ENCODE measurements at regions of chr3 and their contacts with region 1.

Region 1: GRCh38 chr3:48548729-48549705 is 7.6 kb downstream of the PFKFB4 start:
- DNase-seq: peak; percentile 54 to 95
- H3K4me3 ChIP-seq: no peak overlapping the region
- H3K27ac ChIP-seq: peak overlapping the region; percentile 25; the same call in 1 of the 2 replicates
- H3K4me1 ChIP-seq: peaks cover 0 to 1% (median under 1%) of the 10 kb centered on the region in 4 experiments; a peak in 3 of 7 replicates
- H3K27me3 ChIP-seq: no peaks in the 10 kb centered on the region
- CTCF ChIP-seq: peak in 2 of 3 experiments; percentile 95 to 99; a peak in 3 of 4 replicates
- EP300 ChIP-seq: no peak
- POLR2A ChIP-seq: no peak
- RAD21 ChIP-seq: peak; percentile 90 to 94

Region 2: GRCh38 chr3:48465531-48466378 is 83.3 kb before region 1 on chr3:
- CTCF ChIA-PET with region 1: interaction called, 67 read pairs
- POLR2A ChIA-PET with region 1: interaction called, 14 read pairs
- DNase-seq: peak; percentile 87 to 94
- H3K4me3 ChIP-seq: no peak overlapping the region; a peak in 1 of 8 replicates
- H3K27ac ChIP-seq: peak overlapping the region; percentile 88
- H3K4me1 ChIP-seq: peaks cover 0 to 25% (median 14%) of the 10 kb centered on the region in 4 experiments; a peak in 5 of 7 replicates
- H3K27me3 ChIP-seq: no peaks in the 10 kb centered on the region
- CTCF ChIP-seq: peak in 2 of 3 experiments; percentile 87 to 92; a peak in 3 of 4 replicates
- EP300 ChIP-seq: peak in 1 of 2 experiments; percentile 72; a peak in 1 of 3 replicates
- POLR2A ChIP-seq: no peak
- RAD21 ChIP-seq: peak; percentile 93

Region 3: DNA sequence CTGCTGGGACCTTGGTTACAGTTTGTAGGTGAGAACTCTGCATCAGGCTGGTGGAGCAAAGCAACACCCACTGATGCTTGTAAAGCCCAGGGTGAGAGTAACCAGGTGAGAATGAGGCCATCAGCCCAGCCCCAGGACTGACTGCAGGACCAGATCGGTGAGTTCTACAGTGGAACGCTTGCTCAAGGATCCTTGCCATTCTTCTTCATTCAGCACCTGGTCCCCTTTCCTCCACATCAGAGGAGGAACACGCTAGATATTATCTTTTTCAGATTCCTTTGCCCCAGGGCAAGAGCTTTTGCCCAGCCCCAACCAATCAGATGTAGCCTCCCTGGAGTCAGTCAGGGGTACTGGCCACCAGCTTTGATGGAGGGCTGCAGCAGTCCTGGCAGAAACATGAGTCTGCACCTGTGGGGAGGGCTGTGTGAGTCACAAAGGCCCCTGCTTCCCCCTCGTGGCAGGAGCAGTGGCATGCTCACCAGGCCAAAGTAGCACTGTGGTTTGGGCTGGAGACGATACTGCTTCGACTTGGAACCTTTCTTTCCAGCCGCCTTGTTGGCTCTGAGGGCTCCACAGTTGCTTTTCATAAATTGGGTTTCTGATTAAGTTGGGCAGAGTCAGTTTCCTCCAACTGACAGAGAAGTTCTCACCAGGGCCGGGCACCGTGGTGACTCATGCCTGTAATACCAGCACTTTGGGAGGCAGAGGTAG is 41.5 kb before region 1 on chr3:
- CTCF ChIA-PET with region 1: interaction called, 13 read pairs
- POLR2A ChIA-PET with region 1: interaction called, 4 read pairs
- DNase-seq: peak; percentile 75 to 80
- H3K4me3 ChIP-seq: no peak overlapping the region
- H3K27ac ChIP-seq: 0 out of 2 replicates have a peak overlapping the region, but pooled peaks have one; percentile 2
- H3K4me1 ChIP-seq: peaks cover 4 to 14% (median 12%) of the 10 kb centered on the region in 4 experiments
- H3K27me3 ChIP-seq: peaks cover 0 to 3% (median 0%) of the 10 kb centered on the region in 4 experiments; a peak in 2 of 7 replicates
- CTCF ChIP-seq: peak in 2 of 3 experiments; percentile 90 to 95; a peak in 3 of 4 replicates
- EP300 ChIP-seq: no peak; a peak in 1 of 3 replicates
- POLR2A ChIP-seq: no peak
- RAD21 ChIP-seq: peak; percentile 93 to 95

Region 4: GRCh38 chr3:48535578-48535977 is 13.4 kb before region 1 on chr3:
- CTCF ChIA-PET with region 1: interaction called, 35 read pairs
- POLR2A ChIA-PET with region 1: interaction called, 4 read pairs
- DNase-seq: no peak
- H3K4me3 ChIP-seq: no peak overlapping the region
- H3K27ac ChIP-seq: no peak overlapping the region
- H3K4me1 ChIP-seq: no peaks in the 10 kb centered on the region
- H3K27me3 ChIP-seq: no peaks in the 10 kb centered on the region
- CTCF ChIP-seq: no peak
- EP300 ChIP-seq: no peak
- POLR2A ChIP-seq: no peak
- RAD21 ChIP-seq: no peak